ENCODE measurements at regions of chr1 and their contacts with region 1.

Region 1: GRCh38 chr1:53238197-53239155 is at the start of gene MAGOH:
- DNase-seq: peak; percentile 89 to 99
- H3K4me3 ChIP-seq: peak within 1 kb of the TSS; percentile 83 to 99 (median 90)
- H3K27ac ChIP-seq: peak within 1 kb of the TSS; percentile 39; the same call in 1 of the 2 replicates
- H3K4me1 ChIP-seq: no peaks in the 10 kb centered on the region; a peak in 1 of 7 replicates
- H3K27me3 ChIP-seq: no peaks in the 10 kb centered on the region; a peak in 1 of 7 replicates
- CTCF ChIP-seq: no peak
- EP300 ChIP-seq: peak in 1 of 2 experiments; percentile 82; a peak in 1 of 3 replicates
- POLR2A ChIP-seq: peak; percentile 83 to 88
- RAD21 ChIP-seq: no peak
- total RNA-seq, gene MAGOH: 74.3 and 74.5 TPM in 2 replicates

Region 2: DNA sequence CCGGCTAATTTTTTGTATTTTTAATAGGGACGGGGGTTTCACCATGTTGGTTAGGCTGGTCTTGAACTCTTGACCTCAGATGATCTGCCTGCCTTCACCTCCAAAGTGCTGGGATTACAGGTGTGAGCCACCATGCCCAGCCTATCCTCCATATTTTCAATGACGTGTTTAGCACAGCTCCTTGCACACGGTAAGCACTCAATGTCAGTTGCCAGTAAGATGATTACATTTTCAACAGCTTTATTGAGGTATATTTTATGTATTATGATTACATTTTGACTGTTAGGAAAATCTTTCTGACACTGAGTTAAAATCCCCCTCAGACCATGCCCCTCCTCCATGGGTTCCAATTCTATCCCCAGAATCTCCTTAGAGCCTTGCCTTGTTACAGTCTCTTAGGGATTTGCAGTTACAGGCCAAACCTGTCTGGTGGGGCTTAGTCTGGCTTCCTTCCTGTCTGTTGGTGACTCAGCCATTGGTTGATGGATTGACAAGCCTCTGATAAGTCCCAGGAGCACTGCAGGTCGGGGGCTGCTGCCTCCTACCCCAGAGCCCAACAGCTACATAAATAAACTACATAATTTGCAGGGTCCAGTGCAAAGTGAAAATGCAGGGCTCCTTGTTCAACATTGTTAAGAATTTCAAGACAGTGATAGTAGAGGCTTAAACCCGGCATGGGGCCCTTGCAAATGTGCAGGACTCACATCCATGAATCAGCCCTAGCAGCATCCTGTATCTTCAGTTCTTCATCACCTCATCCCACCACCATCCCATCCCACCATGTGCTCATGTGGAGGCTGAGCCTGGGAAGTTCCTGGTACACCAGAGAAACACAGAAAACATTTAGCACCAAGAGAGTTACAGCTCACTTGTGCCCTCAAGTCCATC is 563.7 kb before region 1 on chr1:
- CTCF ChIA-PET with region 1: no interaction called
- POLR2A ChIA-PET with region 1: no interaction called
- DNase-seq: no peak
- H3K4me3 ChIP-seq: no peak overlapping the region
- H3K27ac ChIP-seq: no peak overlapping the region
- H3K4me1 ChIP-seq: peaks cover 0 to 7% (median 2%) of the 10 kb centered on the region in 4 experiments; a peak in 3 of 7 replicates
- H3K27me3 ChIP-seq: no peaks in the 10 kb centered on the region
- CTCF ChIP-seq: no peak
- EP300 ChIP-seq: no peak
- POLR2A ChIP-seq: no peak
- RAD21 ChIP-seq: no peak

Region 3: GRCh38 chr1:53182111-53182593 is 56.3 kb before region 1 on chr1:
- CTCF ChIA-PET with region 1: no interaction called
- POLR2A ChIA-PET with region 1: no interaction called
- DNase-seq: peak; percentile 29 to 95
- H3K4me3 ChIP-seq: no peak overlapping the region
- H3K27ac ChIP-seq: no peak overlapping the region
- H3K4me1 ChIP-seq: no peaks in the 10 kb centered on the region; a peak in 1 of 7 replicates
- H3K27me3 ChIP-seq: no peaks in the 10 kb centered on the region; a peak in 3 of 7 replicates
- CTCF ChIP-seq: peak; percentile 70 to 92 (median 74)
- EP300 ChIP-seq: no peak
- POLR2A ChIP-seq: no peak
- RAD21 ChIP-seq: peak; percentile 61 to 77

Region 4: DNA sequence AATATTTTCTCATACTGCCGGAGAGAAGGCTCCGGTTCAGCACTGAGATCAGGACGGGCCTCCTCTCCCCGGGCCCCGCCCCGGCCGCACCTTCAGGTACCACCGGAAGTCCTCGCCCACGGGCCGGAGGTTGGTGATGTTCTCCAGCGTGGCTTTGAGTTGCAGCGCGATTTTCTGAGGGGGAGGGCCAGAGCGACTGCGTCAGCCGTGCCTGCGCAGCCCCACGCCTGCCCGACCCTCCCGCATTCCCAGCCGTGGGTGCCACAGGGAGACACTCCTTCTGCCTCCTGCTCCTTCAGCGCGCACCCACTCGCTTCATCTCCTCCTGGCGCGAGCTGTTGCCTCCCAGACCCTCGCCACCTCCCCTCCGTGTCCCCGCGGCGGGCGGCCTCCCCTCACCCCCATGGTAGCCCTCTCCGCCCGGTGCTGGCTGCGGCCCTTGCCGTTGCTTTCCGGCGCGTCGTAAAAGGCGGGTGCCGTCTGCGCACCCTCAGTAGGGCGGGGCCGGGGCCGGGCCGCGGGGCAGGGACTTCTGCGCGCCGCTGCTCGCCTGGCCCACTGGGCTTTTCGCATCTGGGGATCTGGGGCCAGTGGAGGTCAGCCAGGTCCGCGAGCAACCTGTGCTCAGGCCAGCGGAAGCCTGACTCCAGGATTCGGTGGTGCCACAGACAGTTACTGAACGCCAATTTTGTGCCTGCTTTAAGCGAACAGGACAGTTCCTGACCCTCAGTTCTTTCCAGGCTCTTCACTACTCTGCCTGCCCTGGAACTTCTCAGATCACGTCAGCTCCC is 18.1 kb before region 1 on chr1 and contains the start of gene CZIB:
- CTCF ChIA-PET with region 1: no interaction called
- POLR2A ChIA-PET with region 1: interaction called, 62 read pairs
- DNase-seq: peak; percentile 49 to 97
- H3K4me3 ChIP-seq: peak within 1 kb of the TSS; percentile 76 to 90 (median 80)
- H3K27ac ChIP-seq: peak within 1 kb of the TSS; percentile 84
- H3K4me1 ChIP-seq: peaks cover 0 to 5% (median 1%) of the 10 kb centered on the region in 4 experiments; a peak in 3 of 7 replicates
- H3K27me3 ChIP-seq: peaks cover 0 to 2% (median 0%) of the 10 kb centered on the region in 4 experiments; a peak in 1 of 7 replicates
- CTCF ChIP-seq: no peak
- EP300 ChIP-seq: no peak
- POLR2A ChIP-seq: peak; percentile 44 to 82; a peak in 2 of 3 replicates
- RAD21 ChIP-seq: no peak; a peak in 1 of 4 replicates
- total RNA-seq, gene CZIB: 46.5 and 46.8 TPM in 2 replicates

Measured in H1 (cell line).